Activated CD4-positive, alpha-beta T cell treated with anti-CD3 and anti-CD28 coated beads for 36 hours (primary cell): ENCODE measurements at regions of chr15 and their contacts with region 1.

Region 1: GRCh38 chr15:72783563-72784237 is at the start of gene ADPGK:
- DNase-seq: peak; percentile 95
- ATAC-seq: peak; percentile 80
- H3K4me3 Mint-ChIP-seq: peak within 1 kb of the TSS; percentile 97
- H3K27ac Mint-ChIP-seq: peak within 1 kb of the TSS; percentile 99
- H3K4me1 Mint-ChIP-seq: peaks cover 60% of the 10 kb centered on the region
- H3K27me3 Mint-ChIP-seq: no peaks in the 10 kb centered on the region
- total RNA-seq, gene ADPGK: 58.0 to 70.8 TPM

Region 2: DNA sequence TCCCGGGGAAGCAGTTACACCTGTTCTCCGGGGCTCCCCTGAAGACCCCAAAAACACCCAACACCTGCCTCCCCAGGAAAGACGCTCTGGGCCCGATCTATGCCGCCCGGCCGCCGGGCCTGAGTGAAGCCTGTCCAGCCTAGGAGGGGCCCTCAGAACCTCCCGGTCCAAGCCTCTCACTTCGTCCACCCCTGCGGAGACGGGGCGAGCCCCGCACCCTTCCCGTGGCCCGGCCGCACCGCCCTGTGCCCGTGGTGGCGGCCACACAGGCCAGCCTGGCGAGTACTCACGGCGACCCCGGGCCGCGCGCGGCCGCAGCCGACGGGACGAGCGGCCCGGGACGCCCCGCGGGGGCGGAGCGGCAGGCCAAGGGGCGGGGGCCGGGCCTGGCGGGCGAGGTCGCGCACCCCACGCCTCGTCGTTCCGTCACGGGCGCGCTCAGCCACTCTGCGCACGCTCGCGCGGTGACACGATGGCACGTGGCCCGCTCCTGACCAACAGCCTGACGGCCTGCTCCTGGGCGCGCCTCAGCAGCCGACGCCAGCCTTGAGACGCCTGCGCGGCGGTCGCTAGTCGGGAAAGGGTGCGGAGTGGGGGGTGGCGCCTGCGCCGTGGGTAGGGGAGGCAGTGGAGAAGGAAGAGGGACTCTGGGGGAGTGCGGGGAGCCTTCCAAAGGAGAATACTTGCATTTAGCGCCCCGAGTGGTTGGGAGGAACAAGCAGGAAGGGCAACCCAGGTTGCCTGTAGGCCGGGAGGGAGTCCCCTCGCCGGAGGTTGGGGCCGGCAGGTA is 511.3 kb before region 1 on chr15 and contains the start of gene PARP6:
- CTCF ChIA-PET with region 1: no interaction called
- POLR2A ChIA-PET with region 1: no interaction called
- intact Hi-C with region 1: loop called in 1 of 2 experiments (anchors 1 kb)
- DNase-seq: peak; percentile 99
- ATAC-seq: peak; percentile 98
- H3K4me3 Mint-ChIP-seq: peak within 1 kb of the TSS; percentile 80
- H3K27ac Mint-ChIP-seq: peak within 1 kb of the TSS; percentile 92
- H3K4me1 Mint-ChIP-seq: peaks cover 35% of the 10 kb centered on the region
- H3K27me3 Mint-ChIP-seq: no peaks in the 10 kb centered on the region
- total RNA-seq, gene PARP6: 41.4 to 58.2 TPM

Region 3: DNA sequence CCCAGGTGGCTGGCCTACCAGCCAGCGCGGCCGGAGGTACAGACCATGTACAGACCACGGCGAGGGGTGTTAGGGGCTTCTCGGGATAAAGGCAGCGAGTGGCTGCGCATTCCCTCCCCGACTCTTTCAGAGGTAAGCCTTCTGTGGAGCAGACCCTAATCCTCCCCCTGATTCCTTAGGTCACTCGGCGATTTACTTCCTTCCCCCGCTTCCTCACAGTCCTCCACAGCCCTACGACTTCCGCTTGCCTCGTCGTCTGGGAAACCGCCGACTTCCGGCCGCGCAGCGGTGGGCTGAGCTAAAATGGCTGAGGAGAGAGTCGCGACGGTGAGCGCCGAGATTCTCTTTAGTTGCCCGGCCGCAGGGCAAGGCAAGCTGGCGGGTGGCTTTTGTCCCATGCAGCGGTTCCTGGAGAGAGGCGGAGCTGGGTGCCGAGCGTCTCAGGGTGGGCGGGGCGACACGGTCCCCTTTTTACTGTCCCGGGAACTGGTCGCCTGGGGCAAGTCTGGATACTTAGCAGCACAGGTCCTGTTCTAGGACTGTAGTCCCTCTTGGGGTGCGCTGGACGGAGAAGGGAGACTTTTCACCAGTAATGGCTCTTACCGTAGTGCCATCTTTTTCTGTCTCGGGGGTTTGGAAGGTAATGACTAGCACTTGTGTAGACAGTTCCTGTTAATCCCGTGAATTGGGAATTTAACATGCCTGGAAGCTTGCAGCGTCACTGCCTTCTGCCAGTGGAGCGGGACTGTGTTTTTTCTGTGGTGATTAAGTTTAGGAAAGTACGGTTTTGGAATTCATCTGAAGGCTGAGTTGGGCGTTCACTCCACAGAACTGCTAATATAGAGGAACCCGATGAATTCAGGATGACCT is 97.5 kb before region 1 on chr15 and contains the starts of genes BBS4 and HIGD2B:
- CTCF ChIA-PET with region 1: no interaction called
- POLR2A ChIA-PET with region 1: no interaction called
- intact Hi-C with region 1: loop called (anchors 1 to 2 kb)
- DNase-seq: peak; percentile 93
- ATAC-seq: peak; percentile 96
- H3K4me3 Mint-ChIP-seq: peak within 1 kb of the TSS; percentile 89
- H3K27ac Mint-ChIP-seq: peak within 1 kb of the TSS; percentile 92
- H3K4me1 Mint-ChIP-seq: peaks cover 20% of the 10 kb centered on the region
- H3K27me3 Mint-ChIP-seq: no peaks in the 10 kb centered on the region
- total RNA-seq, gene BBS4: 13.7 to 14.9 TPM
- total RNA-seq, gene HIGD2B: not detected

Region 4: DNA sequence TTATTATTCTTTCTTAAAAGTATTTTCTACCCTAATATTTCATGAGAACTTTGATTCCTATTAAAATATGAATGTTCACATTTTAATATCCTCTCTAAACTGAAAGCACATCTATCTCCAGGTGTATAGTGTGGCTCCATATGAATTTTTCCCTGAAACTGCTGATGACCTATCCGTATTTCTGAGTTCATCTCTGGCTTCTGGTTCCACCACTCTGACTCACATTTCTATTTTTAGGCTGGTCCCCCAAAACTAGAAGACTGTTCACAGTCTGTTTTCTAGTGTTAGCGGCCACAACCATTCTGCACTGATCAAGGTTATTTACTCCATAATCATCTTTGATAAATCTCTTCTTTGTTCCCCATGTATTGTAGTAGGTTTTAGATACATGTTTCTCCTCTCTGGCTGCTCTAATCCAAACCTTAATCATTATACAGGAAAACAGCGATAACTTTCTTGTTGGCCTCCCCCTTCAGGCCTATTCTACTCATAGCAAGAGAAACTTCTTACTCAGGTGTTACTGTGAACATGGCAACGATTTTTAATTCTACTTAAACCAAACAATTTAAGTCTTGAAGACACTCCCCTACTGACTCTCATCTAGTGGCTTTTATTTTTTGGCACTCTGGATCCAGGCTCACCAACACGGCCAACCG is 12.9 kb before region 1 on chr15:
- CTCF ChIA-PET with region 1: interaction called, 4 read pairs
- POLR2A ChIA-PET with region 1: no interaction called
- intact Hi-C with region 1: loop called in 1 of 2 experiments (anchors 1 kb)
- DNase-seq: no peak
- ATAC-seq: peak; percentile 94
- H3K4me3 Mint-ChIP-seq: no peak overlapping the region
- H3K27ac Mint-ChIP-seq: peak overlapping the region; percentile 34
- H3K4me1 Mint-ChIP-seq: peaks cover 20% of the 10 kb centered on the region
- H3K27me3 Mint-ChIP-seq: no peaks in the 10 kb centered on the region

Region 5: GRCh38 chr15:73081321-73081958 is 297.7 kb after region 1 on chr15:
- CTCF ChIA-PET with region 1: interaction called, 4 read pairs
- POLR2A ChIA-PET with region 1: no interaction called
- intact Hi-C with region 1: loop called (anchors 1 kb)
- DNase-seq: peak; percentile 8
- ATAC-seq: no peak
- H3K4me3 Mint-ChIP-seq: no peak overlapping the region
- H3K27ac Mint-ChIP-seq: no peak overlapping the region
- H3K4me1 Mint-ChIP-seq: no peaks in the 10 kb centered on the region
- H3K27me3 Mint-ChIP-seq: no peaks in the 10 kb centered on the region

Region 6: GRCh38 chr15:73273181-73274002 is 489.7 kb after region 1 on chr15:
- CTCF ChIA-PET with region 1: no interaction called
- POLR2A ChIA-PET with region 1: no interaction called
- intact Hi-C with region 1: loop called in 1 of 2 experiments (anchors 10 kb)
- DNase-seq: peak; percentile 64
- ATAC-seq: peak; percentile 90
- H3K4me3 Mint-ChIP-seq: no peak overlapping the region
- H3K27ac Mint-ChIP-seq: no peak overlapping the region
- H3K4me1 Mint-ChIP-seq: peaks cover 4% of the 10 kb centered on the region
- H3K27me3 Mint-ChIP-seq: no peaks in the 10 kb centered on the region